CD8-positive, alpha-beta memory T cell (primary cell): ENCODE measurements at regions of chr3 and their contacts with region 1.

Region 1: DNA sequence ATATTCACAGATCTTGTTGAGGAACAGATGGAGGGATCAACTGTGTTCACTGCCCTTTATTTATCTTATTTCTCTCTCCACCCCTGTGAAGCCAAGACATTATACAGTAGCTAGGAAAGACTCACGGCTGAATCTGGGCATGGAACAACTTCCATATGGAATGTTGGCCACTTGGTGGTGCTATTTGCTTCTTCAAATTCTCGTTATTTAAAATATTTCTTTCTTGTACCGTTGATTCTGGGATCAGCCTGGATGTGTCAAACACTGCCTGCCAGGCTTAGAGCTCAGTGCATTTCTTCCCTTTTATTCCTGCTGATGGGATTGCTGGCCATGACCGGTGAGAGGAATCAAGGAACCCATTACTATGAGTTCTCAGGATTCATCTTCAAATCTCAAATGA is 17.5 kb upstream of the GASK1A start:
- DNase-seq: peak in 2 of 5 donors; percentile 14 to 43
- H3K4me3 ChIP-seq: no peak overlapping the region
- H3K4me3 Mint-ChIP-seq: no peak overlapping the region
- H3K27ac ChIP-seq: no peak overlapping the region
- H3K27ac Mint-ChIP-seq: no peak overlapping the region
- H3K4me1 ChIP-seq: peaks cover 16% of the 10 kb centered on the region
- H3K4me1 Mint-ChIP-seq: peaks cover 3 to 22% (median 10%) of the 10 kb centered on the region in 3 donors
- H3K27me3 ChIP-seq: peaks cover 4% of the 10 kb centered on the region
- H3K27me3 Mint-ChIP-seq: peaks cover 6 to 8% of the 10 kb centered on the region in 2 donors

Region 2: GRCh38 chr3:42942693-42943092 is 18.9 kb before region 1 on chr3:
- CTCF ChIA-PET with region 1: no interaction called
- POLR2A ChIA-PET with region 1: no interaction called
- DNase-seq: no peak
- H3K4me3 ChIP-seq: no peak overlapping the region
- H3K4me3 Mint-ChIP-seq: no peak overlapping the region
- H3K27ac ChIP-seq: no peak overlapping the region
- H3K27ac Mint-ChIP-seq: no peak overlapping the region
- H3K4me1 ChIP-seq: no peaks in the 10 kb centered on the region
- H3K4me1 Mint-ChIP-seq: peaks cover 0 to 4% (median 3%) of the 10 kb centered on the region in 3 donors
- H3K27me3 ChIP-seq: no peaks in the 10 kb centered on the region
- H3K27me3 Mint-ChIP-seq: peaks cover 4 to 9% of the 10 kb centered on the region in 2 donors

Region 3: GRCh38 chr3:42979044-42979972 is 17.7 kb after region 1 on chr3 and contains the start of gene GASK1A:
- CTCF ChIA-PET with region 1: interaction called, 14 read pairs
- POLR2A ChIA-PET with region 1: no interaction called
- DNase-seq: peak in 1 of 5 donors; percentile 30
- H3K4me3 ChIP-seq: peak within 1 kb of the TSS; percentile 19
- H3K4me3 Mint-ChIP-seq: peak within 1 kb of the TSS; percentile 31 to 87 (median 75)
- H3K27ac ChIP-seq: no peak within 1 kb of the TSS
- H3K27ac Mint-ChIP-seq: no peak within 1 kb of the TSS
- H3K4me1 ChIP-seq: peaks cover 4% of the 10 kb centered on the region
- H3K4me1 Mint-ChIP-seq: peaks cover 6 to 16% (median 6%) of the 10 kb centered on the region in 3 donors
- H3K27me3 ChIP-seq: peaks cover 21% of the 10 kb centered on the region
- H3K27me3 Mint-ChIP-seq: peaks cover 34 to 63% of the 10 kb centered on the region in 2 donors
- total RNA-seq, gene GASK1A: not detected

Region 4: DNA sequence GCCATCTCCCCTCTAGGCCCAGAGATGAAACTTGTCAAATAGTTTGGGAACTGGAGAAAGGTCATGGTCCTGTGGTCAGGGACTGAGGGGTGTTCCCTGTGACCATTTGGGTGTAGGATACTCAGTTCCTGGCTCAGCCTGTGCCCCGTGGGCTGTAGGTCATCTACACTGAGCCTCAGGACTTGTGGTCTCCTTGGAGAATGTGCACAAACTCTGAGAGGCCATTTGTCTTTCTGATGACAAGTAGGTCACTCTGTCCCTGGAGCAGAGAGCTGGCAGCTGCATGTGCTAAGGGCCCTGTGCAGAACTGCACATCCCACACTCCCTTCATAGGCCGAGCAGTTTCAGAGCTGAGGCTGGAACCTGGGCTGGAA is 35.1 kb after region 1 on chr3:
- CTCF ChIA-PET with region 1: no interaction called
- POLR2A ChIA-PET with region 1: no interaction called
- DNase-seq: no peak
- H3K4me3 ChIP-seq: no peak overlapping the region
- H3K4me3 Mint-ChIP-seq: no peak overlapping the region
- H3K27ac ChIP-seq: no peak overlapping the region
- H3K27ac Mint-ChIP-seq: no peak overlapping the region
- H3K4me1 ChIP-seq: no peaks in the 10 kb centered on the region
- H3K4me1 Mint-ChIP-seq: no peaks in the 10 kb centered on the region
- H3K27me3 ChIP-seq: no peaks in the 10 kb centered on the region
- H3K27me3 Mint-ChIP-seq: peaks cover 0 to 3% of the 10 kb centered on the region in 2 donors

Region 5: GRCh38 chr3:43071313-43071893 is 109.8 kb after region 1 on chr3:
- CTCF ChIA-PET with region 1: interaction called, 15 read pairs
- POLR2A ChIA-PET with region 1: no interaction called
- DNase-seq: peak in 3 of 5 donors; percentile 7 to 30 (median 22)
- H3K4me3 ChIP-seq: no peak overlapping the region
- H3K4me3 Mint-ChIP-seq: no peak overlapping the region
- H3K27ac ChIP-seq: no peak overlapping the region
- H3K27ac Mint-ChIP-seq: peak overlapping the region in 1 of 8 donors; percentile 40
- H3K4me1 ChIP-seq: no peaks in the 10 kb centered on the region
- H3K4me1 Mint-ChIP-seq: no peaks in the 10 kb centered on the region
- H3K27me3 ChIP-seq: no peaks in the 10 kb centered on the region
- H3K27me3 Mint-ChIP-seq: peaks cover 0 to 1% of the 10 kb centered on the region in 2 donors